Panc1 (cell line): ENCODE measurements at regions of chr6 and their contacts with region 1.

Region 1: GRCh38 chr6:155340464-155341129 is 26.3 kb upstream of the TFB1M start:
- DNase-seq: no peak
- ATAC-seq: no peak
- H3K4me3 ChIP-seq: no peak overlapping the region
- H3K27ac ChIP-seq: no peak overlapping the region
- H3K4me1 ChIP-seq: no peaks in the 10 kb centered on the region
- H3K27me3 ChIP-seq: no peaks in the 10 kb centered on the region
- CTCF ChIP-seq: peak; percentile 13; the same call in 1 of the 2 replicates

Region 2: DNA sequence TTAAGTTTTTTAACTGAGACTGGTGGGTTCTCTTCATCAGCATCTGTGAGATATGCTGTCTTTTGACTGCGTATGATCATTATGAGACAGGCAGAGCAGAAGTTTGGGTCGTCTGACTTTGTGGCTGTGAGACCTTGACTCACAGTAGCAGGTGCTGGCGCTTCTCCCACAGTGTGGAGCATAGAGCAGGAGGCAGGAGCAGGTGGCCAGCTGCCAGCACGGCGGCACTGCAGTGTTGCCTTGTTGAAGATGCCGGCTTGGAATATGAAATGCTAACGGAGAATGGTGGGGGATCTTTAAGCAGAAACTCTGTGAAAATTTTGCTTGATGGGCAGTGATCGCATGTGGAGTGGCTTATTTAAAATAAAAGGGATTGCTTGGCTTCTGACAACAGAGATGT is 240.5 kb before region 1 on chr6:
- CTCF ChIA-PET with region 1: no interaction called
- POLR2A ChIA-PET with region 1: no interaction called
- in situ Hi-C with region 1: no loop called
- intact Hi-C with region 1: no loop called
- DNase-seq: no peak
- ATAC-seq: peak; percentile 48; the same call in 1 of the 2 replicates
- H3K4me3 ChIP-seq: no peak overlapping the region
- H3K27ac ChIP-seq: no peak overlapping the region
- H3K4me1 ChIP-seq: no peaks in the 10 kb centered on the region; the same call in 1 of the 2 replicates
- H3K27me3 ChIP-seq: no peaks in the 10 kb centered on the region
- CTCF ChIP-seq: no peak

Region 3: GRCh38 chr6:155197932-155198331 is 142.7 kb before region 1 on chr6:
- CTCF ChIA-PET with region 1: interaction called, 12 read pairs
- POLR2A ChIA-PET with region 1: no interaction called
- in situ Hi-C with region 1: no loop called
- intact Hi-C with region 1: no loop called
- DNase-seq: no peak
- ATAC-seq: no peak
- H3K4me3 ChIP-seq: no peak overlapping the region
- H3K27ac ChIP-seq: peak overlapping the region; percentile 94
- H3K4me1 ChIP-seq: peaks cover 30% of the 10 kb centered on the region
- H3K27me3 ChIP-seq: no peaks in the 10 kb centered on the region
- CTCF ChIP-seq: no peak

Region 4: DNA sequence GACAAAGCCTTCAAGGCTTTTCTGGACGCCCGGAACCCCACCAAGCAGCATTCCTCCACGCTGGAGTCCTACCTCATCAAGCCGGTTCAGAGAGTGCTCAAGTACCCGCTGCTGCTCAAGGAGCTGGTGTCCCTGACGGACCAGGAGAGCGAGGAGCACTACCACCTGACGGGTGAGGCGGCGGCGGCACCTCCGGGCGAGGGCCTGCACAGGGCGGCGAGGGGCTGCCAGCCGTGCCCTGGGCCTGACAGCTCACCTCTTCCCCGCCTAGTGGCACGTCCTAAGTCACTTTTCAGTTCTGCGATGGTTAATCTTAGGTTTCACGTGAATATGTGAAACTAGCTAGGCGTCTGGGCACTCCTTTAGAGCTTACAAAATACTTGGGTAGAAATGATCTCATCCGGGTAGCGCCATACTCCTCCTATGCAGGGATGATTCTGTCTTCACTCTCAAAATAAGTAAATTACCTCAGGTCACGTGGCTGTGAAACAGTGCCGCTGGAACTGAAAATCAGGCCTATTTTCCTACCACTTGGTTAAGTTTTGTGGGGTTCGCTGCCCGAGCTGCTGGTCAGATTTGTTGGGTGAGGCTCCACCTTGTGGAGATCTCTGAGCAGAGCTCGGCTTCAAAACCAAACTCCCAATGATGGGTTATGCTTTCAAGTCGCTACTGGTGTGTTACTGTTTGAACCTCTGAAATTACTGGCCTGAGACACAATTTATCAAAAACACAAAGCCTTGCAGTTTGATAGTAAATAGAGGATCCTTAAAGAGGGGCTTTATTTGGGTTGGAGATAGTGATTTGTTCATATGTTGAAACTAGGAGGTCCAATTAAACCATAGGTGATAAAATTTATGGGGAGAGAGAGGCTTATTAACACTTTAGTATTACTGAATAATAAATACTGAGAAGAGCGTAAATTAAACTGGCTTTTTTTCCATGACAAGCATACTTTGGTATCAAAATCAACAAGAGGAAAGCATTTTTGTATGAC is 92.3 kb before region 1 on chr6:
- CTCF ChIA-PET with region 1: no interaction called
- POLR2A ChIA-PET with region 1: no interaction called
- in situ Hi-C with region 1: no loop called
- intact Hi-C with region 1: no loop called
- DNase-seq: peak; percentile 27
- ATAC-seq: peak; percentile 76
- H3K4me3 ChIP-seq: no peak overlapping the region
- H3K27ac ChIP-seq: peak overlapping the region; percentile 80
- H3K4me1 ChIP-seq: peaks cover 3% of the 10 kb centered on the region; the same call in 1 of the 2 replicates
- H3K27me3 ChIP-seq: no peaks in the 10 kb centered on the region
- CTCF ChIP-seq: peak; percentile 85

Region 5: GRCh38 chr6:155260686-155261085 is 79.9 kb before region 1 on chr6:
- CTCF ChIA-PET with region 1: no interaction called
- POLR2A ChIA-PET with region 1: no interaction called
- in situ Hi-C with region 1: no loop called
- intact Hi-C with region 1: no loop called
- DNase-seq: no peak
- ATAC-seq: no peak
- H3K4me3 ChIP-seq: no peak overlapping the region
- H3K27ac ChIP-seq: no peak overlapping the region
- H3K4me1 ChIP-seq: no peaks in the 10 kb centered on the region; the same call in 1 of the 2 replicates
- H3K27me3 ChIP-seq: no peaks in the 10 kb centered on the region
- CTCF ChIP-seq: no peak

Region 6: GRCh38 chr6:155638200-155638599 is 297.6 kb after region 1 on chr6:
- CTCF ChIA-PET with region 1: no interaction called
- POLR2A ChIA-PET with region 1: no interaction called
- in situ Hi-C with region 1: no loop called
- intact Hi-C with region 1: no loop called
- DNase-seq: no peak
- ATAC-seq: no peak
- H3K4me3 ChIP-seq: no peak overlapping the region
- H3K27ac ChIP-seq: no peak overlapping the region
- H3K4me1 ChIP-seq: no peaks in the 10 kb centered on the region
- H3K27me3 ChIP-seq: no peaks in the 10 kb centered on the region
- CTCF ChIP-seq: no peak